ENCODE measurements at regions of chr4 and their contacts with region 1.

Region 1: GRCh38 chr4:152640058-152640833 is 39.6 kb downstream of the TMEM154 start:
- DNase-seq: peak; percentile 22

Region 2: DNA sequence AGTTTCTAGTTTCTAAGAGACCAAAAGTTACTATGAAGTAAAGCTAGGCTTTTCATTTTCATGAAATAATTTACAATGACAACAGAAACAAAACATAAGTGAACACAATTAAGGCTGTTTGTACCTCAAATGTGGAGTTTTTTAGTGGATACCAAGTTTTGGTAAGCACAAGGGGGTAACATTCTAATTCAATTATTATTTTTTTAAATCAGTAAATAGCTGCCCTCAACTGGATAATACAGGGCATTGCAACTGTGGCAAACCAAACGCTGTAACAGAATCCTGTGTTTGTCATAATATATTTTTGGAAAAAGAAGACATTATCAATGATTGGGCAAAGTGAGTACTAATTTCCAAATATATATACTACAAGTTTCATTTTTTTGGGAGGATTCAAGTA is 254.7 kb before region 1 on chr4:
- intact Hi-C with region 1: no loop called
- DNase-seq: no peak

Region 3: GRCh38 chr4:152500800-152501434 is 139.3 kb before region 1 on chr4:
- intact Hi-C with region 1: loop called in 1 of 2 experiments (anchors 5 kb)
- DNase-seq: no peak

Measured in posterior vena cava (tissue), 2 donors.